ENCODE measurements at regions of chr13 and their contacts with region 1.

Region 1: GRCh38 chr13:24160454-24161009 is at the start of gene SPATA13:
- DNase-seq: peak; percentile 81 to 94 (median 90)
- H3K4me3 ChIP-seq: peak within 1 kb of the TSS; percentile 56 to 99 (median 86)
- H3K27ac ChIP-seq: peak within 1 kb of the TSS in 57 of 59 donors; percentile 8 to 89 (median 76)
- H3K27me3 ChIP-seq: peaks cover 0 to 8% (median 0%) of the 10 kb centered on the region in 45 donors
- CTCF ChIP-seq: peak in 13 of 56 donors; percentile 7 to 30 (median 10)
- total RNA-seq, gene SPATA13: 12.1 to 112 (median 36.5) TPM

Region 2: GRCh38 chr13:24053519-24054251 is 106.8 kb before region 1 on chr13:
- intact Hi-C with region 1: loop called (anchors 5 kb)
- DNase-seq: peak in 8 of 10 donors; percentile 38 to 80 (median 72)
- H3K4me3 ChIP-seq: peak overlapping the region in 18 of 59 donors; percentile 5 to 46 (median 33)
- H3K27ac ChIP-seq: peak overlapping the region in 57 of 59 donors; percentile 9 to 95 (median 86)
- H3K27me3 ChIP-seq: no peaks in the 10 kb centered on the region
- CTCF ChIP-seq: peak; percentile 55 to 89 (median 78)

Region 3: GRCh38 chr13:24107955-24108614 is 52.4 kb before region 1 on chr13:
- intact Hi-C with region 1: loop called (anchors 5 kb)
- DNase-seq: no peak
- H3K4me3 ChIP-seq: no peak overlapping the region
- H3K27ac ChIP-seq: peak overlapping the region in 11 of 59 donors; percentile 13 to 78 (median 51)
- H3K27me3 ChIP-seq: peaks cover 0 to 4% (median 0%) of the 10 kb centered on the region in 45 donors
- CTCF ChIP-seq: no peak

Region 4: GRCh38 chr13:24683838-24684599 is 523.5 kb after region 1 on chr13:
- intact Hi-C with region 1: no loop called
- DNase-seq: peak in 7 of 10 donors; percentile 7 to 62 (median 51)
- H3K4me3 ChIP-seq: peak overlapping the region in 2 of 59 donors; percentile 1 to 17
- H3K27ac ChIP-seq: peak overlapping the region in 22 of 59 donors; percentile 5 to 71 (median 32)
- H3K27me3 ChIP-seq: peaks cover 0 to 36% (median 18%) of the 10 kb centered on the region in 45 donors
- CTCF ChIP-seq: peak; percentile 21 to 92 (median 84)

Measured in dorsolateral prefrontal cortex (tissue), 120 donors.